Activated T-helper 1 cell treated with anti-CD3 and anti-CD28 coated beads, Interleukin-12 subunit alpha, Interleukin-12 subunit beta, Interleukin-2, Interleukin-4 antibody, amounts not matched to agents 30 ng/mL and 10 ng/mL and 1 ng/mL, durations not matched to agents 14 hours and 24 hours and 36 hours (primary cell): ENCODE measurements at regions of chrX and their contacts with region 1.

Region 1: DNA sequence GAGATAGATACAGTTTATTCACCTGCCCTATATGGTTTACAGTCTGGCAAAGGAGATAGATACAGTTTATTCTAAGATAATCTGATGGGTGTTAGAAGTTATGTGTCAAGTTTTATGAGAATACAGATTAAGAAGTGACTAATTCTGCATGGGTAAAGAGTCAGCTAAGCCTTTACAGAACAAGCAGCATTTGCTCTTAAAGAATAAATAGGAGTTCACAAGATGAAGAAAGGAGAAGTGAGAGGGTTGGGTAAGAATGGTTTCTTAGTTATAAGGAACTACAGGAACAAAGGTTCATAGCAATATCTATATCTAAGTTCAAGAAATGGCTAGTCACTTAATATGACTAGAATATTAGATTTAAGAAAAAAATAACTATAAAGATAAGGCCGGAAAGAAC is 47.6 kb downstream of the THOC2 start:
- DNase-seq: no peak
- H3K4me3 Mint-ChIP-seq: no peak overlapping the region
- H3K27ac Mint-ChIP-seq: no peak overlapping the region
- H3K4me1 Mint-ChIP-seq: no peaks in the 10 kb centered on the region
- H3K27me3 Mint-ChIP-seq: no peaks in the 10 kb centered on the region

Region 2: GRCh38 chrX:123732670-123733363 is 47.6 kb after region 1 on chrX and contains the start of gene THOC2:
- intact Hi-C with region 1: loop called (anchors 10 kb)
- DNase-seq: peak; percentile 64
- H3K4me3 Mint-ChIP-seq: peak within 1 kb of the TSS; percentile 96
- H3K27ac Mint-ChIP-seq: peak within 1 kb of the TSS; percentile 92
- H3K4me1 Mint-ChIP-seq: peaks cover 37% of the 10 kb centered on the region
- H3K27me3 Mint-ChIP-seq: no peaks in the 10 kb centered on the region
- total RNA-seq, gene THOC2: 87.6 and 91.2 TPM in 2 replicates